Activated naive CD8-positive, alpha-beta T cell treated with anti-CD3 and anti-CD28 coated beads, Interleukin-2, amount 10 ng/mL, durations not matched to agents 7 days and 5 days (primary cell): ENCODE measurements at regions of chr1 and their contacts with region 1.

Region 1: GRCh38 chr1:155273343-155274245 is at the start of gene CLK2:
- DNase-seq: peak; percentile 95
- ATAC-seq: peak; percentile 84
- H3K4me3 Mint-ChIP-seq: peak within 1 kb of the TSS; percentile 97
- H3K27ac Mint-ChIP-seq: peak within 1 kb of the TSS; percentile 93
- H3K4me1 Mint-ChIP-seq: peaks cover 32% of the 10 kb centered on the region
- H3K27me3 Mint-ChIP-seq: no peaks in the 10 kb centered on the region
- total RNA-seq, gene CLK2: 110 to 112 TPM

Region 2: GRCh38 chr1:155244368-155245162 is 29.0 kb before region 1 on chr1:
- POLR2A ChIA-PET with region 1: interaction called, 12 read pairs
- DNase-seq: peak; percentile 96
- ATAC-seq: peak; percentile 97
- H3K4me3 Mint-ChIP-seq: peak overlapping the region; percentile 85
- H3K27ac Mint-ChIP-seq: peak overlapping the region; percentile 95
- H3K4me1 Mint-ChIP-seq: peaks cover 49% of the 10 kb centered on the region
- H3K27me3 Mint-ChIP-seq: no peaks in the 10 kb centered on the region

Region 3: DNA sequence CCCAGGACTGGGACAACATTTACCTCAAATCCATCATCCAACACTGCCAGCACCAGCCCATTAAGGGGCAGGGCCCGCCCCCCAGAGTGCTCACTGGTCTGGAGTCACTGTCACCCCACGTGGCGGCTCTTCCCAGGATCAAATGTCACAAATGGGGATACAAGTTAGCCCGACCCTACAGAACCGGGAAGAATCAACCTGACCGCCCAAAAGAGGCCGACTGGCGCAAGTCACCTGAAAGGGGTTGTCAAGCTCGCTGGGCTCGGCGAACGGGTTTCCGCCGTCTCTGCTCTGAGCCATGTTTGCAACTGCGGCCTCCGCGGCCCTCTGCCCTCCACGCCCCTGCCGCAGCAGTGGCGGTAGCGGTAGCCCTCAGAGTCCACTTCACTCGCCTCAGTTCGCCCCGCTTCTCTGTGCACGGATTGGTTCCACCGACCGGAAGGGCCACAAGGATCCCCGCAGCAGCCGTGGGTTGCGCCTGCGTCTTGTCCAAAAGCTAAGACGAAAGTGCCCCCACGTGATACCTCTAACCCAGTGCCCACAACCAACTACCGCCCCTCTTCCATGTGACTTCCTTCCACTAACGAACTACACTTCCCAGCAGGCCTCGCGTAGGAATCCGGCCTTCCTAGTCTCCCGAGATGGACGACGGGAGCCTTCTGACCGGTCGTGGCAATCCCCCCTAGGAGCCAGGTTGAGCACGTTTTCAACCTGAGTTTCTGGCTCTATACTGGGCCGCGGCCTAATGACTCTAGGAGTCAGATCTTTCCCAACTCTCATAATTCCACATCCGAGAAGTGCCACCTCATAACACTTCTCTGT is 11.5 kb before region 1 on chr1 and contains the start of gene SCAMP3:
- POLR2A ChIA-PET with region 1: interaction called, 34 read pairs
- DNase-seq: peak; percentile 81
- ATAC-seq: peak; percentile 96
- H3K4me3 Mint-ChIP-seq: peak within 1 kb of the TSS; percentile 97
- H3K27ac Mint-ChIP-seq: peak within 1 kb of the TSS; percentile 93
- H3K4me1 Mint-ChIP-seq: peaks cover 35% of the 10 kb centered on the region
- H3K27me3 Mint-ChIP-seq: no peaks in the 10 kb centered on the region
- total RNA-seq, gene SCAMP3: 81.7 to 84.2 TPM

Region 4: GRCh38 chr1:155287987-155288543 is 14.5 kb after region 1 on chr1:
- POLR2A ChIA-PET with region 1: no interaction called
- DNase-seq: no peak
- ATAC-seq: no peak
- H3K4me3 Mint-ChIP-seq: no peak overlapping the region
- H3K27ac Mint-ChIP-seq: no peak overlapping the region
- H3K4me1 Mint-ChIP-seq: no peaks in the 10 kb centered on the region
- H3K27me3 Mint-ChIP-seq: peaks cover 15% of the 10 kb centered on the region

Region 5: DNA sequence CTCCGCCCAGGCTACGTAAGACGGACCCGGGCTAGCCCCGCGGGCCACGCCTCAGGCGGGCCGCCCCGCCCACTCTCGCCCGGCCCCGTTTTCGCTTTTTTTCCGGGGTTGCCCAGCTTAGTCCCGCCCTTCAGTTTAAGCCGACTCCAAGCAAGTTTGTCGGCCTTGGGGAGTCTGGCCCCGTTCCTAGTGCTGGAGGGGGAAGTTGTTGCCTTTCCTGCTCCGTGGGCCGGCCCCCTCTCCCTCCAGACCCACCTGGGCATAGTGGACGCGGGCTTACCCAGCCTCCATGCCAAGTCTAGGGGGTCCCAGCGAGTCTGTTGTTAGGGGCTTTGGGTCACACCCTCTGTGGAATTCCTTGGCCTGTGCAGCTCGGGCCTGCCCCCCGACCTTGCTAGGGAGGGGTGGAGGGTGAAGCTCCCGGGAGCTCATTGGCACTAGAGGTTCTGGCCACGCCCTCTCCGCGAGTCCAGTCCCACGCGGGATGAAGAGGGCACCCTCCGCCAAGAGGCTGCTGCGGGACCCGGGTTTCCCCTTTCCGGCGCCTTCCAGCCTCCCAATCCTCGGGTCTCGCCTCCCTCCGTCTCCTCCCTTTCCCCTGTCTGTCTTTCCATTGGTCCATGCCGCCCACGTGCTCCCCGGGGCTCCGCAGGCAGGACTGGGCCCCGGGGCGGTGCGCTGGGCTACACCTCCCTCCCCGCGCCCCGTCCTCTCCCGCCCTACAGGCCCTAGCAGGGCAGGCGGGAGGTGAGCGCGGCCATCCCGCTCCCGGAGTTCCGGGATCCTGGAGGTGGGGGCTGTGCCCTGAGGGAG is 50.4 kb after region 1 on chr1:
- POLR2A ChIA-PET with region 1: interaction called, 11 read pairs
- DNase-seq: peak; percentile 90
- ATAC-seq: peak; percentile 82
- H3K4me3 Mint-ChIP-seq: peak overlapping the region; percentile 90
- H3K27ac Mint-ChIP-seq: peak overlapping the region; percentile 81
- H3K4me1 Mint-ChIP-seq: peaks cover 39% of the 10 kb centered on the region
- H3K27me3 Mint-ChIP-seq: no peaks in the 10 kb centered on the region

Region 6: DNA sequence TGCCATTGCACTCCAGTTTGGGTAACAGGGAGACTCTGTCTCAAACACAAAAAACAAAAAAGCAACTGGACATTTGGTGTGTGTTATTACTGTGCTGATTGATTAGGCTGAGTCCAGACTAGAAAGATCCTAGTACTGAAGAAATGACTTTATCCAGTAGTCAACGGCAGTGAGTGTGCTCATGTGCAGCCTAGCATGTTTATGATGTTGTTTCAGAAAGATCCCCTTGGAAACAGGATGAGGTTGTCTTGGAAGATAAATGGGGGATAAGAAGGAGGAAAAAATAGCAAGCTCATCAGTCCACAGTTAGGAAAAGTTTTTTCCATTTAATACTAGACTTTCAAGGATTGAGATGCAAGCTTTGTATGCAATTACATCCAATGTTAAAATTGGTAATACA is 61.4 kb after region 1 on chr1:
- POLR2A ChIA-PET with region 1: no interaction called
- DNase-seq: no peak
- ATAC-seq: no peak
- H3K4me3 Mint-ChIP-seq: no peak overlapping the region
- H3K27ac Mint-ChIP-seq: no peak overlapping the region
- H3K4me1 Mint-ChIP-seq: peaks cover 8% of the 10 kb centered on the region
- H3K27me3 Mint-ChIP-seq: no peaks in the 10 kb centered on the region